Prostate gland (tissue), 2 donors: ENCODE measurements at regions of chr1 and their contacts with region 1.

Region 1: GRCh38 chr1:209435654-209436566 is 147.6 kb upstream of the CAMK1G start:
- DNase-seq: peak; percentile 77
- H3K4me3 ChIP-seq: no peak overlapping the region
- H3K27ac ChIP-seq: peak overlapping the region; percentile 34 to 41
- H3K4me1 ChIP-seq: no peaks in the 10 kb centered on the region
- H3K27me3 ChIP-seq: no peaks in the 10 kb centered on the region
- CTCF ChIP-seq: peak; percentile 63 to 93 (median 74)
- POLR2A ChIP-seq: no peak

Region 2: DNA sequence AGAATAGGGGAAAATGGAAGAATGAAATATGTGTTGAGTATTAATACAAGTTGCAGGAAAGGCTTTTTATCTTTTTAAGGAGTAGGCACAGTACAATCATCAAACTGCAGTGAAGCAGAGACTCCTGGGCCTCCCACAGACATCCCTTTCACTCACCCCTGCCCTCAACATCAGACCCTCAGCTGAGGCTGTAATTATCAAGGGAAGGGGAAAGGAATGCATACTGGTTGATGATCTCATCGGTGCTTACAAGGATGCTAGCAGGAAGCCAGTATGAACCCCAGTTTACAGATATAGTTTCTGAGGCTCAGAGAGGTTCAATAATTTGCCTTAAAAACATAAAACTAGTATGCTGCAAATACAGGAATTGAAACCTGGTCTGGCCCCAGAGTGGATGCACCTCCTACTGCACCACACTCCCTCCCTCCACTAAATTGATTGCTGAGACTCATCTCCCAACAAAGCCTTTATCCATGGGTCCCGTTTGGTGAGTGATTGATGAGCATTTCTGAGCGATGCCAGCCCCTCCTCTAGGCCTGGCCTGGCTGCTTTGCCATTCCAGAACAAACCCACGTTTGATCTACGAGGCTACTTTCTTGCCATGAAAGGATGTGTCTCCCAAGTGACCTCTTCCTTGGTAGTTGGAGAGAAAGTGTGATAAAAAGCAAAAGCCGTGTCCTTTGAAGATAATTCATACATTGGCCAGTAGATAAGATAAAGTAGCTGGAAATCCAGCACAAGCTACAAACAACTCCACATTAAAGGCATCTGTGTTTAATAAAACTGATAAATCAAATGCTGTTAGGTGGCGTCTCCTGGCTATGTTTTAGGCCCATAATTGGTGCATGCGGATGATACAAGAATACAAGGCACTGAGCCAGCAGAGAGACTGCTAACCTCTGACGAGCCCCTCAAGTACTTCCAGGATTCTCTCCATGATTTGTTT is 86.3 kb before region 1 on chr1:
- intact Hi-C with region 1: loop called (anchors 10 kb)
- DNase-seq: no peak
- H3K4me3 ChIP-seq: no peak overlapping the region
- H3K27ac ChIP-seq: no peak overlapping the region
- H3K4me1 ChIP-seq: no peaks in the 10 kb centered on the region
- H3K27me3 ChIP-seq: no peaks in the 10 kb centered on the region
- CTCF ChIP-seq: no peak
- POLR2A ChIP-seq: no peak